GM12878 (cell line): ENCODE measurements at regions of chr9 and their contacts with region 1.

Region 1: GRCh38 chr9:5364294-5365024 is 24.8 kb upstream of the RLN1 start:
- DNase-seq: peak; percentile 51
- ATAC-seq: peak; percentile 96
- H3K4me3 ChIP-seq: no peak overlapping the region
- H3K27ac ChIP-seq: peak overlapping the region; percentile 44
- H3K4me1 ChIP-seq: peaks cover 15% of the 10 kb centered on the region
- H3K27me3 ChIP-seq: no peaks in the 10 kb centered on the region
- CTCF ChIP-seq: no peak
- EP300 ChIP-seq: peak; percentile 63 to 72; a peak in 3 of 4 replicates
- POLR2A ChIP-seq: no peak
- RAD21 ChIP-seq: no peak

Region 2: GRCh38 chr9:5375091-5375490 is 10.6 kb after region 1 on chr9:
- CTCF ChIA-PET with region 1: interaction called, 6 read pairs
- POLR2A ChIA-PET with region 1: interaction called, 3 read pairs
- RAD21 ChIA-PET with region 1: interaction called, 3 read pairs
- SMC1A ChIA-PET with region 1: interaction called, 12 read pairs
- in situ Hi-C with region 1: no loop called
- intact Hi-C with region 1: no loop called
- DNase-seq: no peak
- ATAC-seq: peak; percentile 98
- H3K4me3 ChIP-seq: no peak overlapping the region
- H3K27ac ChIP-seq: no peak overlapping the region
- H3K4me1 ChIP-seq: no peaks in the 10 kb centered on the region
- H3K27me3 ChIP-seq: no peaks in the 10 kb centered on the region
- CTCF ChIP-seq: no peak
- EP300 ChIP-seq: 0 out of 4 replicates have a peak, but pooled peaks of 1 of the 2 experiments have one; percentile 45
- POLR2A ChIP-seq: no peak
- RAD21 ChIP-seq: no peak

Region 3: DNA sequence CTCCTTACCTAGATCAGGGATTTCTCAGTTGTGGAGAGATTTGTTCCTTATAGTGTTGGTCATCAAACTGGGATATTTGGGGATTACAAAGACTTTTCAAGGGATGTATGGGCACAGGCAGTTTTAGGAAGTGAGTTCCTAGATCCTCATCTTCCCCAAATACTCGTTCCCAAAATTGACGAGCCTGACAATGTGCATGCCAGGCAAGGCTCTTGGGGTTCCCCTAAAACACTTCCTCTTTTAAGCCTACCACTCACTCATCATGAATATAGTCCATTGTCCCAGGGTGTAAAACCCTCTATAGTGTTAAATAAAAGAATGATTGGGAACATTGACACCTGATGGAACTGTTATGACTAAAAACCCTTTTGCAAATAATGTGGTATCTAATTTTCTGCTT is 172.2 kb after region 1 on chr9:
- CTCF ChIA-PET with region 1: no interaction called
- POLR2A ChIA-PET with region 1: no interaction called
- RAD21 ChIA-PET with region 1: no interaction called
- SMC1A ChIA-PET with region 1: no interaction called
- in situ Hi-C with region 1: no loop called
- intact Hi-C with region 1: no loop called
- DNase-seq: no peak
- ATAC-seq: peak; percentile 86
- H3K4me3 ChIP-seq: no peak overlapping the region
- H3K27ac ChIP-seq: peak overlapping the region; percentile 38; the same call in 1 of the 2 replicates
- H3K4me1 ChIP-seq: peaks cover 29% of the 10 kb centered on the region
- H3K27me3 ChIP-seq: no peaks in the 10 kb centered on the region
- CTCF ChIP-seq: no peak
- EP300 ChIP-seq: peak in 1 of 2 experiments; percentile 41; a peak in 1 of 4 replicates
- POLR2A ChIP-seq: no peak
- RAD21 ChIP-seq: no peak